Activated B cell treated with CpG ODN at 0.5 μM for 24 hours (primary cell): ENCODE measurements at regions of chr2 and their contacts with region 1.

Region 1: DNA sequence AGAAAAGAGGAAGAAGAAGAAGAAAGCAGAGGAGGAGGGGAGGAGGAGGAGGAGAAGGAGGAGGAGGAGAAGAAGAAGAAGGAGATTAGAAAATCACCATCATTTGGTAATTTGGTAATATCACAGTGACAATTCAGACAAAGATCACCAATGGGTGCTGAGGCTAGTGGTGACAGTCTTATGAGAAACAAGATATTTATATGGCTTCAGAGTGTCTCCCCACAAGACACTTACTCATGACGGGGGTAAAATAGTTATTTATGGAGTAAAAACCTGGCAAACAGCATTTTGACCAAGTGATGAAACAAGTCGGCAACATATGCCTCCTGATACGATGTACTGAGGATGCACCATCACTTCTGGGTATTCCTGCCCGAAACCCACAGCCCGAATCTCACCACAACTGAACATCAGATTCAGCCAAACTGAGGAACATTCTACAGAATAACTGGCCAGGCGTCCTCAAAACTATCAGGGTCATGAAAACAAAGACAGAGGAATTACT is 4.9 kb downstream of the ASPRV1 start:
- DNase-seq: no peak
- ATAC-seq: no peak
- H3K4me3 Mint-ChIP-seq: no peak overlapping the region
- H3K27ac Mint-ChIP-seq: no peak overlapping the region
- H3K4me1 Mint-ChIP-seq: no peaks in the 10 kb centered on the region
- H3K27me3 Mint-ChIP-seq: peaks cover 7% of the 10 kb centered on the region
- CTCF ChIP-seq: no peak

Region 2: GRCh38 chr2:69674316-69674670 is 282.2 kb before region 1 on chr2:
- CTCF ChIA-PET with region 1: no interaction called
- POLR2A ChIA-PET with region 1: no interaction called
- intact Hi-C with region 1: no loop called
- DNase-seq: no peak
- ATAC-seq: no peak
- H3K4me3 Mint-ChIP-seq: no peak overlapping the region
- H3K27ac Mint-ChIP-seq: no peak overlapping the region
- H3K4me1 Mint-ChIP-seq: no peaks in the 10 kb centered on the region
- H3K27me3 Mint-ChIP-seq: peaks cover 26% of the 10 kb centered on the region
- CTCF ChIP-seq: no peak

Region 3: GRCh38 chr2:71136174-71136573 is 1179.6 kb after region 1 on chr2:
- CTCF ChIA-PET with region 1: no interaction called
- POLR2A ChIA-PET with region 1: interaction called, 14 read pairs
- intact Hi-C with region 1: no loop called
- DNase-seq: no peak
- ATAC-seq: no peak
- H3K4me3 Mint-ChIP-seq: no peak overlapping the region
- H3K27ac Mint-ChIP-seq: no peak overlapping the region
- H3K4me1 Mint-ChIP-seq: no peaks in the 10 kb centered on the region
- H3K27me3 Mint-ChIP-seq: no peaks in the 10 kb centered on the region
- CTCF ChIP-seq: no peak